ENCODE measurements at regions of chr18 and their contacts with region 1.

Region 1: GRCh38 chr18:79507076-79507545 is 111.4 kb downstream of the NFATC1 start:
- DNase-seq: peak in 41 of 42 donors; percentile 21 to 77 (median 55)

Region 2: GRCh38 chr18:79395761-79396387 is 111.2 kb before region 1 on chr18 and contains the start of gene NFATC1:
- intact Hi-C with region 1: loop called (anchors 5 kb)
- DNase-seq: peak in 36 of 42 donors; percentile 35 to 78 (median 60)

Measured in head of caudate nucleus (tissue), 42 donors.